RWPE1 (cell line): ENCODE measurements at regions of chr16 and their contacts with region 1.

Region 1: GRCh38 chr16:69150146-69150865 is 17.9 kb downstream of the UTP4 start:
- DNase-seq: peak; percentile 45
- H3K27ac ChIP-seq: no peak overlapping the region
- CTCF ChIP-seq: peak; percentile 81

Region 2: DNA sequence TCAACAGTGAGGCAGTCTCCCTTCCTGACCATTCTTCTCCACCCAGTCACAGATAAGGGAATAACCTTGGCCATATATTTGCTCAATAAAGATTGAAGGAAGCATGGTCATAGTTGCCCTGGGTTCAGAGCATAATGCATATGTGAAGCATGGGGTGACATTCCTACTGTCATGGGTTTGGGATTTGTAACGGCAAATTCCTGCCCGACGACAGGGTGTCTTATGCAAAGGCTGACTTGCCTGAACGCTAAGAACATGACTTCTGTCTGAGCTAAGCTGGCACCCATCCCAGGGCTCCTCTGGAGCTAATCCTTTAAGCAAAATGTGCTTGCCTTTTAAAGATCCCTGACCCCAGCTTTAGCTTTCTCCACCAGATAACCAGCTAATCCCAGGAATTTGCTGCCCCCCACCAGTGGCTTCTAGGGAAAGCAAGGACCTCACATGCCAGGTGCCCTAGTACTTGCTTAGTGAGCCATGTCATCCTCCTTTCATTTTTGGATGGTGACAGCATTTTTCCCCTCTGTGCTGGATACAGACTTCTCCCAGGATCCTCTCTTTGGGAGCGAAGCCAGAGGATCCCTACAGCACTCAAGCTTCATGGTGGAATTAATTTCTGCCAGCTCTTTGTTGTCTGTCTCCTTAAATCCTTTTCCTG is 851.3 kb before region 1 on chr16:
- CTCF ChIA-PET with region 1: no interaction called
- POLR2A ChIA-PET with region 1: no interaction called
- DNase-seq: peak; percentile 45
- H3K27ac ChIP-seq: peak overlapping the region; percentile 92
- CTCF ChIP-seq: no peak

Region 3: GRCh38 chr16:68951991-68952877 is 198.1 kb before region 1 on chr16:
- CTCF ChIA-PET with region 1: interaction called, 10 read pairs
- POLR2A ChIA-PET with region 1: no interaction called
- DNase-seq: peak; percentile 90
- H3K27ac ChIP-seq: peak overlapping the region; percentile 81
- CTCF ChIP-seq: no peak

Region 4: DNA sequence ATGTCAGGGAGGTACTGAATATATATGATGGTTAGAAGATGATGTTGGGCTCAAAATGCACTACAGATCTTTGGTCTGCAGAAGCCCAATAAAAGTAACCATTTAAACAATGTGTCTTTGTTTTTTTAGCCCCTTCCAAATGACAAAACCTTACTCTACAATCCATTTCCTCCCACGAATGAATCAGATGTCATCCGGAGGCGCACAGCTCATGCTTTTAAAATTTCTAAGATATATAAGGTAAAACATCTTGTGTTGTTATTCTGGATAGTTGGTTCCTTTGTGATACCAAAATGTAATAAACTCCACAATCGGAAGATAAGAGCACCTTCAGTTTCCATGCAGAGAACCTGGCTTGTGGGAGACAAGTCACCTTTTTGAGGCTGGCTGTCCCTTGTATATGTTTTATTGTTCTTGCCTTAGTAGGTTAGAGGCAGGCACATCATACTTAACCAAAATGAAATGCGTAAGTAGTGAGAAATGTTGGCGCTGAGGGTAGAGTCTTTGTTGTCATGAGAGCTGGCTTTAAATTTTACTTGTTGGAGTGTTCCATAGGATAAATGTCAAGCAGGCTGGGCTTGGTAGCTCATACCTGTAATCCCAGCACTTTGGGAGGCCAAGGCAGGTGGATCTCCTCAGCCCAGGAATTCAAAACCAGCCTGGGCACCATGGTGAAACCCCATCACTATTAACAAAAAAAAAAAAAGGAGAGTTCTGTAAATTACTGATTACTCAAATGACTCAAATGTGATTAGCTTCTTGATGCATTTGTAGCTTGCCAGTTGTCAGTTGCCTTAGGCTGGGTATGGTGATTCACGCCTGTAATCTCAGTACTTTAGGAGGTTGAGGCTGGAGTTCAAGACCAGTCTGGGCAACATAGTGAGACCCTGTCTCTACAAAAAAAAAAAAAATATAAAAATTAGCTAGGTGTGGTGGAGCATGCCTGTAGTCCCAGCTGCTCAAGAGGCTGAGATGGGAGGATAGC is 16.9 kb after region 1 on chr16:
- CTCF ChIA-PET with region 1: interaction called, 11 read pairs
- POLR2A ChIA-PET with region 1: no interaction called
- DNase-seq: no peak
- H3K27ac ChIP-seq: no peak overlapping the region
- CTCF ChIP-seq: no peak

Region 5: GRCh38 chr16:69204172-69204571 is 53.9 kb after region 1 on chr16:
- CTCF ChIA-PET with region 1: no interaction called
- POLR2A ChIA-PET with region 1: no interaction called
- DNase-seq: no peak
- H3K27ac ChIP-seq: peak overlapping the region; percentile 82
- CTCF ChIP-seq: no peak